ENCODE measurements at regions of chr22 and their contacts with region 1.

Region 1: GRCh38 chr22:28791841-28792490 is 8.4 kb downstream of the XBP1 start:
- DNase-seq: no peak
- H3K4me3 ChIP-seq: no peak overlapping the region
- H3K27ac ChIP-seq: no peak overlapping the region
- H3K4me1 ChIP-seq: no peaks in the 10 kb centered on the region
- H3K27me3 ChIP-seq: no peaks in the 10 kb centered on the region
- CTCF ChIP-seq: no peak
- EP300 ChIP-seq: no peak
- POLR2A ChIP-seq: no peak
- RAD21 ChIP-seq: no peak

Region 2: GRCh38 chr22:28810821-28811491 is 19.0 kb after region 1 on chr22:
- CTCF ChIA-PET with region 1: interaction called, 3 read pairs
- POLR2A ChIA-PET with region 1: interaction called, 13 read pairs
- DNase-seq: no peak
- H3K4me3 ChIP-seq: no peak overlapping the region
- H3K27ac ChIP-seq: no peak overlapping the region
- H3K4me1 ChIP-seq: no peaks in the 10 kb centered on the region; a peak in 1 of 7 replicates
- H3K27me3 ChIP-seq: no peaks in the 10 kb centered on the region
- CTCF ChIP-seq: no peak
- EP300 ChIP-seq: no peak
- POLR2A ChIP-seq: no peak
- RAD21 ChIP-seq: no peak